A673 (cell line): ENCODE measurements at regions of chr1 and their contacts with region 1.

Region 1: DNA sequence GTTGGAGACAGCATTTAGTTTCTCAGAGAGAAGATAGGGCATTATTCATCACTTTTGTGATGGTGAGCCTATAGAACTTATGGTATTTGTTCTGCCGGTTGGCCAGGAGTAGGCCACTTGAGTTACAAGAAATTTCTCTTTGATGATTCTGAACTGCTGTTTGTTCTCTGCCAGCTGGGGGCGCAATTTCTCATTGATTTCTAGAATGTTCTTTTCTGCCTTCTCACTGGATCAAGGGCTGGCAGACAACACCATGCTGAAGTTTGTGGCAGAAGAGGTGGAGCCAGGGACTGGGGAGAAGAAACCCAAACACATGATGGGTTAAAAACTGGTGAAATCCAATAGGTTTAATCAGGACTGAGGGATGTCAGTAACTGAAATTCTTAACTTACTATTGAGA is 360.6 kb downstream of the FAM72C start:
- DNase-seq: peak; percentile 7
- H3K4me3 ChIP-seq: no peak overlapping the region
- H3K27ac ChIP-seq: no peak overlapping the region
- H3K4me1 ChIP-seq: no peaks in the 10 kb centered on the region
- H3K27me3 ChIP-seq: peaks cover 2% of the 10 kb centered on the region
- CTCF ChIP-seq: peak; percentile 52

Region 2: DNA sequence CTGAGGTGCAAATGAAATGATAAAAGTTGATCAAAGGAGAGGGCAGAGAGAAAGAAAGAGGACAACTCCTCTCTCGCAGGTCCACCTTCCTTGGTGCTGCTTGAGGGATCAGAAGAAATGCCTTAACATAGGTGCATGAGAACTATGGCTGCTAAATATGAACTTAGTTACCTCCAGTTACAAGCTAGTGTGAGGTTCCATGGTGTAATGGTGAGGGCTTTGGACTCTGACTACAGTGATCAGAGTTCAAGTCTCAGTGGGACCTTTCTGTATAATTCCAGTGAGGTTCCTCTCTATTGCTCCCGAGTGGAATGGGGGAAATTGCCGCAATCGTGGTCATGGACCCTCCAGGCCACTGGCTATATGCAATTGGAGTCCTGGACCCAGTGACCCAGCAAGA is 26.7 kb before region 1 on chr1:
- CTCF ChIA-PET with region 1: no interaction called
- POLR2A ChIA-PET with region 1: no interaction called
- intact Hi-C with region 1: no loop called
- DNase-seq: no peak
- H3K4me3 ChIP-seq: no peak overlapping the region
- H3K27ac ChIP-seq: no peak overlapping the region
- H3K4me1 ChIP-seq: no peaks in the 10 kb centered on the region
- H3K27me3 ChIP-seq: no peaks in the 10 kb centered on the region
- CTCF ChIP-seq: no peak

Region 3: GRCh38 chr1:143629236-143629635 is 18.1 kb after region 1 on chr1:
- CTCF ChIA-PET with region 1: no interaction called
- POLR2A ChIA-PET with region 1: no interaction called
- intact Hi-C with region 1: loop called (anchors 2 kb)
- DNase-seq: no peak
- H3K4me3 ChIP-seq: no peak overlapping the region
- H3K27ac ChIP-seq: no peak overlapping the region
- H3K4me1 ChIP-seq: no peaks in the 10 kb centered on the region
- H3K27me3 ChIP-seq: no peaks in the 10 kb centered on the region
- CTCF ChIP-seq: no peak

Region 4: GRCh38 chr1:143643148-143643885 is 32.2 kb after region 1 on chr1:
- CTCF ChIA-PET with region 1: no interaction called
- POLR2A ChIA-PET with region 1: no interaction called
- intact Hi-C with region 1: no loop called
- DNase-seq: no peak
- H3K4me3 ChIP-seq: no peak overlapping the region
- H3K27ac ChIP-seq: no peak overlapping the region
- H3K4me1 ChIP-seq: no peaks in the 10 kb centered on the region
- H3K27me3 ChIP-seq: peaks cover 57% of the 10 kb centered on the region
- CTCF ChIP-seq: no peak

Region 5: GRCh38 chr1:143661418-143662101 is 50.4 kb after region 1 on chr1:
- CTCF ChIA-PET with region 1: no interaction called
- POLR2A ChIA-PET with region 1: no interaction called
- intact Hi-C with region 1: no loop called
- DNase-seq: peak; percentile 25
- H3K4me3 ChIP-seq: no peak overlapping the region
- H3K27ac ChIP-seq: no peak overlapping the region
- H3K4me1 ChIP-seq: no peaks in the 10 kb centered on the region
- H3K27me3 ChIP-seq: peaks cover 69% of the 10 kb centered on the region
- CTCF ChIP-seq: no peak

Region 6: GRCh38 chr1:143720087-143721023 is 109.2 kb after region 1 on chr1:
- CTCF ChIA-PET with region 1: no interaction called
- POLR2A ChIA-PET with region 1: no interaction called
- intact Hi-C with region 1: no loop called
- DNase-seq: peak; percentile 59
- H3K4me3 ChIP-seq: no peak overlapping the region
- H3K27ac ChIP-seq: no peak overlapping the region
- H3K4me1 ChIP-seq: no peaks in the 10 kb centered on the region
- H3K27me3 ChIP-seq: peaks cover 42% of the 10 kb centered on the region
- CTCF ChIP-seq: no peak